IMR-90 (cell line): ENCODE measurements at regions of chr5 and their contacts with region 1.

Region 1: DNA sequence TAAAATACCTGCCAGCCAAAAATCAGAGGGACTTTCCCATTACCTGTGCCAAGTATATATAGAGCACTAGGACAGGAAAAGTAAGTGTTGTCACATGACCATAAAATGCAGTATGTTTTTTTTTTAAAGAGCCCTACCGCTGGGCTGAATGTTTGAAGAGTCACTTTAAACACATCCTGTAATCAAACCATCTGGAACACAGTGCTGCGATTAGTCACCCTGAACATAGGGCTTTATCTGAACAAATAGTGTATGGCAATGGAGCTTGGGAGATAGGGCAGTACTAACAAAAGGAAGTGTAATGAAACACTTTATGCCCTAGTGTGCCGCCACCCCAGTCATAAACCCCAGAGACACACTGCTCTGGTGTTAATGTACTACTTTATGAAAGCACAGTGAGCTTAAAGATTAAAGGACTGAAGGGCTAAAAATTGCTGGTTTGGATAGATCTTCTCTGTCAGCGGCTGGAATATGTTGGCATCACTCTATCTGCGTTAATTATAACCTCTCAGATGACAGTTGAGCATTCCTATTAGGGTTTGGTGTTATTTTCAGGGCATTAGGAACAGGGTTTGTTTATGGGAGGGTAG is 90.4 kb downstream of the ZNF608 start:
- DNase-seq: peak; percentile 94
- ATAC-seq: peak; percentile 43
- H3K4me3 ChIP-seq: peak overlapping the region; percentile 11; the same call in 1 of the 2 replicates
- H3K27ac ChIP-seq: peak overlapping the region; percentile 88
- H3K4me1 ChIP-seq: peaks cover 29% of the 10 kb centered on the region
- H3K27me3 ChIP-seq: no peaks in the 10 kb centered on the region
- CTCF ChIP-seq: no peak
- POLR2A ChIP-seq: no peak
- RAD21 ChIP-seq: peak; percentile 37

Region 2: GRCh38 chr5:124596595-124597388 is 59.2 kb before region 1 on chr5:
- CTCF ChIA-PET with region 1: no interaction called
- POLR2A ChIA-PET with region 1: no interaction called
- dilution Hi-C with region 1: no loop called
- in situ Hi-C with region 1: no loop called
- intact Hi-C with region 1: no loop called
- DNase-seq: peak; percentile 92
- ATAC-seq: peak; percentile 84
- H3K4me3 ChIP-seq: no peak overlapping the region
- H3K27ac ChIP-seq: no peak overlapping the region
- H3K4me1 ChIP-seq: peaks cover 5% of the 10 kb centered on the region
- H3K27me3 ChIP-seq: no peaks in the 10 kb centered on the region
- CTCF ChIP-seq: no peak
- POLR2A ChIP-seq: no peak
- RAD21 ChIP-seq: 0 out of 2 replicates have a peak, but pooled peaks have one; percentile 8

Region 3: GRCh38 chr5:124692324-124692723 is 36.3 kb after region 1 on chr5:
- CTCF ChIA-PET with region 1: no interaction called
- POLR2A ChIA-PET with region 1: no interaction called
- dilution Hi-C with region 1: no loop called
- in situ Hi-C with region 1: no loop called
- intact Hi-C with region 1: loop called (anchors 2 kb)
- DNase-seq: peak; percentile 91
- ATAC-seq: peak; percentile 83
- H3K4me3 ChIP-seq: no peak overlapping the region
- H3K27ac ChIP-seq: no peak overlapping the region
- H3K4me1 ChIP-seq: peaks cover 4% of the 10 kb centered on the region; the same call in 1 of the 2 replicates
- H3K27me3 ChIP-seq: no peaks in the 10 kb centered on the region
- CTCF ChIP-seq: no peak
- POLR2A ChIP-seq: no peak
- RAD21 ChIP-seq: no peak